Activated CD8-positive, alpha-beta memory T cell treated with anti-CD3 and anti-CD28 coated beads, Interleukin-2, amount 10 ng/mL, durations not matched to agents 7 days and 5 days (primary cell): ENCODE measurements at regions of chr18 and their contacts with region 1.

Region 1: GRCh38 chr18:49238433-49239042 is 221.9 kb downstream of the DYM start:
- DNase-seq: no peak
- ATAC-seq: no peak
- H3K4me3 Mint-ChIP-seq: no peak overlapping the region
- H3K27ac Mint-ChIP-seq: no peak overlapping the region
- H3K4me1 Mint-ChIP-seq: peaks cover 2% of the 10 kb centered on the region
- H3K27me3 Mint-ChIP-seq: no peaks in the 10 kb centered on the region

Region 2: DNA sequence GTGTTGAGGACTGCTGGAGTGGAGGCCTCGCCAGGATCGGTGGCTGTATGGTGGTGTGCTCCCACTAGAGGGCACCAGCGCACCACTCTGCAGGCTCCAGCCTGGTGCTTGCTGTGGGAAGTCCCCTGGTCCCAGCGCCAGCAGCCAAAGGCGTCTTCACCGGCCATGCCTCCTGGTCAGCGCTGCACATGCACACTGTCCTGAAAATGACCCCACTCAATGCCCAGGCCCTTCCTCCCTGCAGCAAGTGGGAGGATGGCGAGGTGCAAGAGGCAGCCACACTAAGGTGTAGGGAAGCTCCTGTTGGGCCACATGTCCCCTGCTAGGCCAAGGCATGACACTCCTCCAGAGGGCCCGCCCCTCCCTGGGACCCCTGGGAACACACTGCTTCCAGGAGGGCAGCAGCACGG is 563.2 kb before region 1 on chr18:
- CTCF ChIA-PET with region 1: interaction called, 10 read pairs
- DNase-seq: peak; percentile 88
- ATAC-seq: peak; percentile 94
- H3K4me3 Mint-ChIP-seq: no peak overlapping the region
- H3K27ac Mint-ChIP-seq: no peak overlapping the region
- H3K4me1 Mint-ChIP-seq: peaks cover 6% of the 10 kb centered on the region
- H3K27me3 Mint-ChIP-seq: no peaks in the 10 kb centered on the region

Region 3: DNA sequence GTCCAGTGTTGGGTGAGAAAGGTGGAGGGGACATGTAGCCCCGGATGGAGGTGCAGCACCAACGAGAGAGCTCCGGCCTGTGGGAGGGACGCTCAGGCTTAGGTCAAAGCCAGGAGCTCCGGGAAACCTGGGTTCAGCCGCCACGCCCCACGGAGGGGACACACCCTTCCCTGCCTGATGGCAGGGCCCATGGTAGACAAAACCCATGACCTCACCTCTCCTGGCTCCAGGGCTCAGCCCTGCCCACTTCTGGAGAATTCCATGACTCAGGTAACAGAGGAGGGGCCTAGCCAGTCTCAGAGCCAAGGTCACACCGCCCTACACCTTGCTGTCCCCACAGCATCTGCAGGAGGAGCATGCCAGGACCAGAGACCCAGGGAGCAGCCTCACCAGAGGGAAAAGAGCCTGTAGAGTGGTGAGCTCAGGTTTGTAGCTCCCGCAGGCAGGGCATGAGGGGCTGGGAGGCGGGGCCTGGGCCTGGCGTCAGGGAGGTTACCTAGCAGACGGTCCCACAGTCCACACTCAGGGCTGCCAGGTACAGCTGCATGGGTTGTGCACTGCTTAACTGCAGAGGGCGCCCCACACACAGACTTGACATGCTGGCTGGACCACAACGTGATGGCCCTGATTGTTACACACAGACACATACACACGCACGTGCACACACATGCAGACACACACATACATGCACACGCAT is 217.0 kb before region 1 on chr18:
- CTCF ChIA-PET with region 1: interaction called, 14 read pairs
- DNase-seq: peak; percentile 80
- ATAC-seq: peak; percentile 74
- H3K4me3 Mint-ChIP-seq: no peak overlapping the region
- H3K27ac Mint-ChIP-seq: no peak overlapping the region
- H3K4me1 Mint-ChIP-seq: peaks cover 16% of the 10 kb centered on the region
- H3K27me3 Mint-ChIP-seq: no peaks in the 10 kb centered on the region